GM12878 (cell line): ENCODE measurements at regions of chr14 and their contacts with region 1.

Region 1: DNA sequence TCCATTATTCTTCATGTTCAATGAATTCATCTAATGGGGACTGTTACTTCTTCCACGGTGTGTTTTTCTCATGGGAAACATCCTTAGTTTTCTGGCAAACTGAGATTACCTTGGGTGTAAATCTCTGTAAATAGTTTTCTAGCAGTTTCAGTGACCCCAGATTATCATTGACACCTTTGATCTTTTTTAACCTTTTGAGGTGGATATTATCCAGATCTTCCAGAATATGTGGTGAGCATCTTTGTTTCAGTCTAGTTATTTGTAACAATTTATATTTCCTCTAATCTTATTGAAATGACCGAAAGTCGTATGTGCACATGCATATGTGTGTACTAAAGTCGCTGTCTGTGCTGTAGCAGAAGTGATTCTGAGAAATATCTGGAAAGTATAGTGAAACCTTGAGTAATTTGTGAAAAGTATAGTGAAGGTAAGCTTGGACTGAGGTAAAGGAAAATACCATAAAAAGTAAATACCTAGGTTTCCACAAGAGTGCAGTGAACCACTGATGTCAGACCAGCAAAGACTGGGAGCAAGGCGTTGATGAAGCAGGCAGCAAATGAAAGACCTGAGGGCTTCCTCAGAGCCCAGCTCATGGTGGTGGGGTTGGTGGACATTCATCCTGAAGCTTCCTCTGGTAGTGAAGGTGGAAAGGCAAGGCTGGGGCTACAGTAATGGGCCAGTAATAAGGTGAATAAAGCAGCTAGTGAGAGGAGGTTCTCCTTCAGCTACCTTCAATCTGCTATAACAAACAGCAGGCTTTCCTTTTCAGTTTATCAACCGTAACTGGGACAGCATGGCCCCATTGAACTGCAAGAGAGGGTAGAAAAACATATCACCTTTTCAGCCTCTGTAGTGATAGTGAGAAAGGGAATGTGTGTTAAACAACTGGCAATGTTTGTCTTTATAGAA is 480.2 kb upstream of the FBXO33 start:
- DNase-seq: peak; percentile 16
- ATAC-seq: peak; percentile 96
- H3K4me3 ChIP-seq: no peak overlapping the region
- H3K27ac ChIP-seq: no peak overlapping the region; the same call in 1 of the 2 replicates
- H3K4me1 ChIP-seq: peaks cover 4% of the 10 kb centered on the region
- H3K27me3 ChIP-seq: no peaks in the 10 kb centered on the region
- CTCF ChIP-seq: no peak
- EP300 ChIP-seq: peak; percentile 61 to 67; a peak in 3 of 4 replicates
- POLR2A ChIP-seq: no peak
- RAD21 ChIP-seq: no peak

Region 2: DNA sequence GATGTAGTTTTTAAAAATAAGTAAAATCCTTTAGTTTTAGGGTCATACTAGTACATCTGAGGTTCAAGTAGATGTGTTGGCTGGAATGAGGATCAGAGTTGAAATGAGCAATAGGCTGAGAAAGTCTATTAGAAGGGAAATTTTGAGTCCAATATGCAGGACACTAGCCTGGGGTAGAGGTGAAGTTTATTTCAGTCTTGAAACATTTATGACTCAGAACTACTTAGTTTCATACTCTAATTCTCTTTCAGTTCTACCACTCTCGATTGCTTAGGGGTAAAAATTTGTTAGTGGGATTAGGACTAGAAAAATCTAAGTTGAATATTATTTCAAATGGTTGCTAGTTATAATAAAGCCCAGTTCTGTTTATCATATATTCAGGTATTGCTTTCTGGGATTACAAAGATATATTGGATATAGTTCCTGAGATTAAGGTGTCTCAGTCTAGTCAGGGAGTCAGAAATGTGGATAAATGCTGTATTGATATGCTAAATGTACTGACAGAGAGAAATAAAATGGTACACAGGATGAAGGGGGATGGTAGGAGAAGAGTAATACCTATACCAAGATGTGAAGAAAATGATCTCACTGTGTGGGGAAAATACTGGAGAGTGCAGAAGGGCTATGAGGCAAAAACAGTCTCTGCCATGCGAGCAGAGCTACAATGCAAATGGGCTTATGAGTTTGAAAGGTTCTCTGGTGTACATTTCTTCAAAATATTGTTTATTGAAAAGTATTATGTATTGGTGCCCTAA is 84.4 kb before region 1 on chr14:
- CTCF ChIA-PET with region 1: interaction called, 3 read pairs
- POLR2A ChIA-PET with region 1: no interaction called
- RAD21 ChIA-PET with region 1: no interaction called
- SMC1A ChIA-PET with region 1: no interaction called
- in situ Hi-C with region 1: no loop called
- intact Hi-C with region 1: loop called (anchors 1 kb)
- DNase-seq: peak; percentile 21
- ATAC-seq: peak; percentile 98
- H3K4me3 ChIP-seq: no peak overlapping the region
- H3K27ac ChIP-seq: no peak overlapping the region
- H3K4me1 ChIP-seq: no peaks in the 10 kb centered on the region
- H3K27me3 ChIP-seq: no peaks in the 10 kb centered on the region; a peak in 1 of 4 replicates
- CTCF ChIP-seq: no peak
- EP300 ChIP-seq: 0 out of 4 replicates have a peak, but pooled peaks of 1 of the 2 experiments have one; percentile 25
- POLR2A ChIP-seq: no peak
- RAD21 ChIP-seq: peak; percentile 19; the same call in 1 of the 2 replicates

Region 3: GRCh38 chr14:39974036-39974435 is 61.6 kb after region 1 on chr14:
- CTCF ChIA-PET with region 1: no interaction called
- POLR2A ChIA-PET with region 1: no interaction called
- RAD21 ChIA-PET with region 1: no interaction called
- SMC1A ChIA-PET with region 1: interaction called, 5 read pairs
- in situ Hi-C with region 1: no loop called
- intact Hi-C with region 1: loop called (anchors 1 kb)
- DNase-seq: peak; percentile 76
- ATAC-seq: peak; percentile 98
- H3K4me3 ChIP-seq: no peak overlapping the region
- H3K27ac ChIP-seq: no peak overlapping the region
- H3K4me1 ChIP-seq: no peaks in the 10 kb centered on the region
- H3K27me3 ChIP-seq: no peaks in the 10 kb centered on the region
- CTCF ChIP-seq: no peak
- EP300 ChIP-seq: peak; percentile 92 to 96
- POLR2A ChIP-seq: no peak
- RAD21 ChIP-seq: no peak

Region 4: DNA sequence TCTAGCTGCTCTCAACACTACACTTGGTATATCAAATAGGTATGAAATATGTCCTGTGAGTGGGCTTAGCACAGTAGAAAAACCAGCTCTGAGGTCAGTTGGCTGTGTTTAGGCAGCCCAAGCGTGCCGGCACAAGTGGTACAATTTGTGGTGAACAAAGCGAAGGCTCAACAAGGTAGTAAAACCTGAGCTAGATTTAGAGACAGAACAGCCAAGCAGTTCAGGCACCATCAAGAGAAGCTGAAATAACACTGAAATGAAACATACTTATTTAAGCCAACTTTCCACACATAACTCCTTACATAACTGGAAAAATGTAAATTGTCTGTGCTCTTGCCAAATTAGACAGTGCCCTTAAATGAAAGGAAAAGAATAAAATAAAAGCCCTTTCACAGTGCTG is 116.5 kb after region 1 on chr14:
- CTCF ChIA-PET with region 1: no interaction called
- POLR2A ChIA-PET with region 1: no interaction called
- RAD21 ChIA-PET with region 1: no interaction called
- SMC1A ChIA-PET with region 1: no interaction called
- in situ Hi-C with region 1: no loop called
- intact Hi-C with region 1: no loop called
- DNase-seq: no peak
- ATAC-seq: no peak
- H3K4me3 ChIP-seq: no peak overlapping the region
- H3K27ac ChIP-seq: no peak overlapping the region
- H3K4me1 ChIP-seq: no peaks in the 10 kb centered on the region
- H3K27me3 ChIP-seq: no peaks in the 10 kb centered on the region
- CTCF ChIP-seq: no peak
- EP300 ChIP-seq: no peak
- POLR2A ChIP-seq: no peak
- RAD21 ChIP-seq: no peak

Region 5: DNA sequence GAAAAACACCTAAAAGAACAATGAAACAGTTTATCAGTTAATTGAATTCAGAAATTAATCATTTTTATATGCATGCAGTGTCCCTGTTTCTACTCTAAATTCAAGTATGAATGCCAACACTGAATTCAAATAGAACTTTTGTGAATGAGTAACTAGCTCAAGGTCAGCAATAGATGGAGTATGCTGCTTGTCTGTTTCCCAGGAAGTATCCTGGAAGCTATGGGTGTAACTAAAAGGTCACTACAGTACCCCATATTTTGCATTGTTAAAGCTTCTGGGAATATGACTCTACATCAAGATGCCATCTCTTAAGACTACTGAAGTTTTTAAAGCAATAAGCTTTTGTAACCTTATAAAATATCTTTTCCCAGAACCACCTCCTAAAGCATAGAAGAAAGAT is 201.2 kb after region 1 on chr14:
- CTCF ChIA-PET with region 1: no interaction called
- POLR2A ChIA-PET with region 1: no interaction called
- RAD21 ChIA-PET with region 1: no interaction called
- SMC1A ChIA-PET with region 1: no interaction called
- in situ Hi-C with region 1: no loop called
- intact Hi-C with region 1: no loop called
- DNase-seq: no peak
- ATAC-seq: no peak
- H3K4me3 ChIP-seq: no peak overlapping the region
- H3K27ac ChIP-seq: no peak overlapping the region
- H3K4me1 ChIP-seq: no peaks in the 10 kb centered on the region
- H3K27me3 ChIP-seq: no peaks in the 10 kb centered on the region
- CTCF ChIP-seq: no peak
- EP300 ChIP-seq: no peak
- POLR2A ChIP-seq: no peak
- RAD21 ChIP-seq: no peak